Activated CD4-positive, alpha-beta memory T cell treated with anti-CD3 and anti-CD28 coated beads, Interleukin-2, amount 10 ng/mL, durations not matched to agents 7 days and 5 days (primary cell): ENCODE measurements at regions of chr13 and their contacts with region 1.

Region 1: GRCh38 chr13:38349390-38350113 is at the start of gene UFM1:
- DNase-seq: peak; percentile 88
- H3K4me3 Mint-ChIP-seq: peak within 1 kb of the TSS; percentile 97
- H3K27ac Mint-ChIP-seq: peak within 1 kb of the TSS; percentile 96
- H3K4me1 Mint-ChIP-seq: peaks cover 34% of the 10 kb centered on the region
- H3K27me3 Mint-ChIP-seq: peaks cover 2% of the 10 kb centered on the region
- total RNA-seq, gene UFM1: 39.1 to 41.2 TPM

Region 2: GRCh38 chr13:38361542-38362262 is 12.2 kb after region 1 on chr13:
- CTCF ChIA-PET with region 1: no interaction called
- POLR2A ChIA-PET with region 1: interaction called, 13 read pairs
- DNase-seq: no peak
- H3K4me3 Mint-ChIP-seq: no peak overlapping the region
- H3K27ac Mint-ChIP-seq: no peak overlapping the region
- H3K4me1 Mint-ChIP-seq: no peaks in the 10 kb centered on the region
- H3K27me3 Mint-ChIP-seq: no peaks in the 10 kb centered on the region